Activated B cell treated with CpG ODN at 0.5 μM for 24 hours (primary cell): ENCODE measurements at regions of chr11 and their contacts with region 1.

Region 1: DNA sequence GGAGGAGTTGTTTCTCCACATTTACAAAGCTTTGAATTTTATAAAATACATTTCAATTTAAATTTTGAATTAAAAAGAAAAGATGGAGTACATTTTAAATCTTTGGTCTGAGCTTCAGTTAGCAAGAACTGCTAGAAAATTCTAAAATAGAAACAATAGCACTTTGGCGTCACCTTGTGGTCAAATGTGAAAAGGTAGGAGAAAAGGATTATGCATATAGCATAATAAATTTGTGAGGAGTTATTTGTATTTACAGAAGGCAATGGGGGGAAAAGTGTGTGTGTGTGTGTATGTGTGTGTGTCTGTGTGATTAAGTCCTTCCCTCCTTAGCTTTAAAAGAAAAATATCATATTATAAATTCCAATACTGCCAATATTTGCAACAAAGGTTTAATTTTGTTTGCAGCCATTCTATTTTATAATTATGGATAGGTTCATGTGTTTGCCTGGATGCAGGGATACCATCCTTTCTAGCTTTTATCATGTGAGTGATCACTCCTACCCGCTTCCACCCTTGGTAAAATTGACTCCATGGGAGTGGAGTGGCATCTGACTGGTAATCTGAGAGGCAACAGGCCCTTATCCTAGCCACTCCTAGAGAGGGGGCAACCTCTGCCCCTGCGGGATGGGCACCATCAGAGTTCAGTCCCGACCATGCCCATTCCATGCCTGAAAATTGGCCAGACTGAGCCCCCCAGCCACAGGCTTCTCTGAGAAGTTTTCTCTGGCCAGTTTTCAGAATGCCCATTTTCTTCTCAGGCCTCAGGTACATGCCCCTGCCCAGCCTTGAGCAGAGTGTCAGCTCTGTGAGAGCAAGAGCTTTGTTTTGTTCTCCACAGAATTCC is 13.6 kb upstream of the LGR4 start:
- DNase-seq: no peak
- ATAC-seq: peak; percentile 54
- H3K4me3 Mint-ChIP-seq: no peak overlapping the region
- H3K27ac Mint-ChIP-seq: no peak overlapping the region
- H3K4me1 Mint-ChIP-seq: no peaks in the 10 kb centered on the region
- H3K27me3 Mint-ChIP-seq: no peaks in the 10 kb centered on the region
- CTCF ChIP-seq: peak; percentile 78

Region 2: GRCh38 chr11:25838918-25839611 is 1647.1 kb before region 1 on chr11:
- CTCF ChIA-PET with region 1: no interaction called
- POLR2A ChIA-PET with region 1: no interaction called
- intact Hi-C with region 1: no loop called
- DNase-seq: no peak
- ATAC-seq: no peak
- H3K4me3 Mint-ChIP-seq: no peak overlapping the region
- H3K27ac Mint-ChIP-seq: no peak overlapping the region
- H3K4me1 Mint-ChIP-seq: no peaks in the 10 kb centered on the region
- H3K27me3 Mint-ChIP-seq: no peaks in the 10 kb centered on the region
- CTCF ChIP-seq: no peak

Region 3: GRCh38 chr11:25981998-25982397 is 1504.2 kb before region 1 on chr11:
- CTCF ChIA-PET with region 1: no interaction called
- POLR2A ChIA-PET with region 1: no interaction called
- intact Hi-C with region 1: loop called (anchors 2 kb)
- DNase-seq: no peak
- ATAC-seq: peak; percentile 71
- H3K4me3 Mint-ChIP-seq: peak overlapping the region; percentile 47
- H3K27ac Mint-ChIP-seq: peak overlapping the region; percentile 43
- H3K4me1 Mint-ChIP-seq: peaks cover 27% of the 10 kb centered on the region
- H3K27me3 Mint-ChIP-seq: no peaks in the 10 kb centered on the region
- CTCF ChIP-seq: no peak

Region 4: GRCh38 chr11:26297189-26297975 is 1188.8 kb before region 1 on chr11:
- CTCF ChIA-PET with region 1: no interaction called
- POLR2A ChIA-PET with region 1: no interaction called
- intact Hi-C with region 1: loop called (anchors 1 kb)
- DNase-seq: no peak
- ATAC-seq: peak; percentile 28
- H3K4me3 Mint-ChIP-seq: no peak overlapping the region
- H3K27ac Mint-ChIP-seq: no peak overlapping the region
- H3K4me1 Mint-ChIP-seq: no peaks in the 10 kb centered on the region
- H3K27me3 Mint-ChIP-seq: peaks cover 2% of the 10 kb centered on the region
- CTCF ChIP-seq: peak; percentile 28

Region 5: DNA sequence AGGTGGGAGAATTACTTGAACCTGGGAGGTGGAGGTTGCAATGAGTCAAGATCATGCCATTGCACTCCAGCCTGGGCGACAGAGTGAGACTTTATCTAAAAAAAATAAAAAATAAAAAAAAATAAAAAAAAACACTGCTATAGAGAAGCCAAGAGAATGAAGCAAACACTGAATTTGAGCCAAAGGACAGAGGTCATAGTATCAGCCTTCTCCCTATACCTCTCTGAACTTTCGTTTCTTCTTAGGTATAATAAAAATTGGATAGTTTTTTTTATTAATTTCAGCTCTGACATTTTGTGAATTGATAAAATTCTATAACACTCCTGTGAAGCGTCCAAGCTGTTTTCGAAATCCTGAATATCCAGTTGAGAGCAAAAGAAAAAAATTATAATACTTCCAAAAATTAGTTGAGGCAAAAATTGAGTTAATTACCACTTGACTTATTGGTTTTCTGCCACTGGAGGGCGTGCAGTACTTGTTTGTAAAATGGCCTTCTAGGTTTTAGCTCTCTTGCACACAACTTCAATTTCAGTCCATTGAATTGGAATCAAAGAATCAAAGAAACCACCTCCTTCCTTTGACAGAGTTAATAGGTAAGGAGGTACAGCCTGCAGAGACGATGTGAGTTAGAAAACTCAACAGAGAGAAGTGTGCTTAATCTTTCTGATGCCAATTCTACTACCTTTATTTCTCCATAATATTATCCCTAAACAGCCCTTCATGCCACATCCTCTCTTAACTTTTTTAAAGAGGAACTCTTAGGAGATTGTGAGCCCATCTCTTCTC is 302.3 kb before region 1 on chr11:
- CTCF ChIA-PET with region 1: interaction called, 95 read pairs
- POLR2A ChIA-PET with region 1: interaction called, 3 read pairs
- intact Hi-C with region 1: loop called (anchors 1 kb)
- DNase-seq: no peak
- ATAC-seq: peak; percentile 52
- H3K4me3 Mint-ChIP-seq: no peak overlapping the region
- H3K27ac Mint-ChIP-seq: no peak overlapping the region
- H3K4me1 Mint-ChIP-seq: no peaks in the 10 kb centered on the region
- H3K27me3 Mint-ChIP-seq: peaks cover 5% of the 10 kb centered on the region
- CTCF ChIP-seq: peak; percentile 40

Region 6: GRCh38 chr11:27472398-27473016 is 13.6 kb before region 1 on chr11 and contains the start of gene LGR4:
- CTCF ChIA-PET with region 1: interaction called, 6 read pairs
- POLR2A ChIA-PET with region 1: interaction called, 5 read pairs
- intact Hi-C with region 1: loop called (anchors 1 kb)
- DNase-seq: peak; percentile 51
- ATAC-seq: peak; percentile 87
- H3K4me3 Mint-ChIP-seq: peak within 1 kb of the TSS; percentile 91
- H3K27ac Mint-ChIP-seq: peak within 1 kb of the TSS; percentile 75
- H3K4me1 Mint-ChIP-seq: peaks cover 32% of the 10 kb centered on the region
- H3K27me3 Mint-ChIP-seq: peaks cover 11% of the 10 kb centered on the region
- CTCF ChIP-seq: no peak
- total RNA-seq, gene LGR4: 2.4 and 3.0 TPM in 2 replicates